T-cell (primary cell): ENCODE measurements at regions of chr17 and their contacts with region 1.

Region 1: DNA sequence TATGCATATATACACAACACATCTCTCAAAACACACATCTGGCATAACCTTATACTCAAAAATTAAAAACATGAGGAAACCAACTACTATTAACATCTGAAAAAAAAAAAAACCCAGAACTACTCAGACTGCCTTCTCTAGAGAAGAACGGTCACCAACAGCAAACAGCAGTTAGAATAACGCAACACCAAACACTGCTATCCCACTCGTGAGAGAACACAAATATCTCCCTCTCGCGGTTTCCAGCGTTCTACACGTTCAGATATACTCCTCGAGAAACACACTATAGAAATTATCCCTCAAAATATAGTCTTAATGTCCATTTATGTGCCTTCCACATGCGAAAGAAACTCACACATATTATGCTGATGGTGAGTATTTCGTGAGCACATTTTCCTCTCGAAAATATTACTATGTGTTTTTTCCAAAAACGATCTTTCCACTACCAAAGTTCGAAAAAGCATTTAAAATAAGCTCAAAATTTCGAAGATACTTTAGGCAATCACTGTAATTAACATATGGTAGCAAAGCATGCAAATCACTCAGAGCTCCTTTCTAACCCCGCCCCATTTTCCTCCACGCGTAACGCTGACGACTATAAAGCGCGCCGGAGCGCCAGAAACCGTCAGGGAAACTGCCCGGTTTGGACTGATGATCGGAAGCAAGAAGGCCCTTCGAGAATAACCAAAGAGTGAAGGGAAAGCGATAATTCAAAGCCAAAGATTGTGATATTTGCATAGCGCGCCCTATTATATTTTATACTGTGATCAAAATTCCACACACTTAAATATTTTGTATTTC is 60.1 kb downstream of the TEX14 start:
- DNase-seq: peak; percentile 77 to 96 (median 90)
- ATAC-seq: peak; percentile 87 to 90 (median 88)
- H3K4me3 ChIP-seq: peak overlapping the region; percentile 44 to 69
- H3K4me3 Mint-ChIP-seq: no peak overlapping the region
- H3K27ac ChIP-seq: peak overlapping the region; percentile 90
- H3K27ac Mint-ChIP-seq: no peak overlapping the region
- H3K4me1 ChIP-seq: peaks cover 5 to 10% of the 10 kb centered on the region in 2 experiments
- H3K4me1 Mint-ChIP-seq: peaks cover 0 to 11% (median 5%) of the 10 kb centered on the region in 3 donors
- H3K27me3 ChIP-seq: no peaks in the 10 kb centered on the region
- H3K27me3 Mint-ChIP-seq: no peaks in the 10 kb centered on the region

Region 2: GRCh38 chr17:58658804-58659713 is 27.3 kb after region 1 on chr17:
- CTCF ChIA-PET with region 1: interaction called, 5 to 8 read pairs
- POLR2A ChIA-PET with region 1: interaction called, 7 to 29 read pairs
- DNase-seq: peak; percentile 45 to 93 (median 77)
- ATAC-seq: peak; percentile 79 to 95 (median 94)
- H3K4me3 ChIP-seq: peak overlapping the region; percentile 53 to 57
- H3K4me3 Mint-ChIP-seq: peak overlapping the region; percentile 78 to 87 (median 79)
- H3K27ac ChIP-seq: peak overlapping the region; percentile 97
- H3K27ac Mint-ChIP-seq: peak overlapping the region; percentile 96 to 100
- H3K4me1 ChIP-seq: peaks cover 2 to 14% of the 10 kb centered on the region in 2 experiments
- H3K4me1 Mint-ChIP-seq: peaks cover 19 to 25% (median 20%) of the 10 kb centered on the region in 3 donors
- H3K27me3 ChIP-seq: peaks cover 0 to 2% of the 10 kb centered on the region in 2 experiments
- H3K27me3 Mint-ChIP-seq: no peaks in the 10 kb centered on the region

Region 3: GRCh38 chr17:58692239-58693055 is 60.7 kb after region 1 on chr17 and contains the start of gene RAD51C:
- CTCF ChIA-PET with region 1: interaction called in 1 of 2 experiments, 11 read pairs
- POLR2A ChIA-PET with region 1: interaction called, 6 read pairs
- DNase-seq: peak; percentile 69 to 91 (median 82)
- ATAC-seq: peak; percentile 98 to 100 (median 99)
- H3K4me3 ChIP-seq: peak within 1 kb of the TSS; percentile 81 to 93
- H3K4me3 Mint-ChIP-seq: peak within 1 kb of the TSS; percentile 90 to 98 (median 94)
- H3K27ac ChIP-seq: peak within 1 kb of the TSS; percentile 78
- H3K27ac Mint-ChIP-seq: peak within 1 kb of the TSS; percentile 89 to 91
- H3K4me1 ChIP-seq: peaks cover 8 to 14% of the 10 kb centered on the region in 2 experiments
- H3K4me1 Mint-ChIP-seq: peaks cover 26 to 33% (median 33%) of the 10 kb centered on the region in 3 donors
- H3K27me3 ChIP-seq: no peaks in the 10 kb centered on the region
- H3K27me3 Mint-ChIP-seq: no peaks in the 10 kb centered on the region
- total RNA-seq, gene RAD51C: 10.9 to 28.4 (median 18.1) TPM